Activated CD4-positive, alpha-beta memory T cell treated with anti-CD3 and anti-CD28 coated beads, Interleukin-2, amount 10 ng/mL, durations not matched to agents 7 days and 5 days (primary cell): ENCODE measurements at regions of chr16 and their contacts with region 1.

Region 1: GRCh38 chr16:1420111-1420540 is 421 bp downstream of the UQCC4 start:
- DNase-seq: peak; percentile 24
- H3K4me3 Mint-ChIP-seq: peak overlapping the region; percentile 86
- H3K27ac Mint-ChIP-seq: peak overlapping the region; percentile 98
- H3K4me1 Mint-ChIP-seq: peaks cover 39% of the 10 kb centered on the region
- H3K27me3 Mint-ChIP-seq: no peaks in the 10 kb centered on the region

Region 2: GRCh38 chr16:1208239-1208830 is 211.8 kb before region 1 on chr16:
- CTCF ChIA-PET with region 1: no interaction called
- POLR2A ChIA-PET with region 1: no interaction called
- DNase-seq: peak; percentile 22
- H3K4me3 Mint-ChIP-seq: peak overlapping the region; percentile 37
- H3K27ac Mint-ChIP-seq: peak overlapping the region; percentile 49
- H3K4me1 Mint-ChIP-seq: peaks cover 4% of the 10 kb centered on the region
- H3K27me3 Mint-ChIP-seq: no peaks in the 10 kb centered on the region

Region 3: GRCh38 chr16:1308977-1309885 is 110.9 kb before region 1 on chr16 and contains the start of gene UBE2I:
- CTCF ChIA-PET with region 1: no interaction called
- POLR2A ChIA-PET with region 1: interaction called, 10 read pairs
- DNase-seq: peak; percentile 98
- H3K4me3 Mint-ChIP-seq: peak within 1 kb of the TSS; percentile 100
- H3K27ac Mint-ChIP-seq: peak within 1 kb of the TSS; percentile 96
- H3K4me1 Mint-ChIP-seq: peaks cover 45% of the 10 kb centered on the region
- H3K27me3 Mint-ChIP-seq: no peaks in the 10 kb centered on the region
- total RNA-seq, gene UBE2I: 198 to 199 TPM

Region 4: DNA sequence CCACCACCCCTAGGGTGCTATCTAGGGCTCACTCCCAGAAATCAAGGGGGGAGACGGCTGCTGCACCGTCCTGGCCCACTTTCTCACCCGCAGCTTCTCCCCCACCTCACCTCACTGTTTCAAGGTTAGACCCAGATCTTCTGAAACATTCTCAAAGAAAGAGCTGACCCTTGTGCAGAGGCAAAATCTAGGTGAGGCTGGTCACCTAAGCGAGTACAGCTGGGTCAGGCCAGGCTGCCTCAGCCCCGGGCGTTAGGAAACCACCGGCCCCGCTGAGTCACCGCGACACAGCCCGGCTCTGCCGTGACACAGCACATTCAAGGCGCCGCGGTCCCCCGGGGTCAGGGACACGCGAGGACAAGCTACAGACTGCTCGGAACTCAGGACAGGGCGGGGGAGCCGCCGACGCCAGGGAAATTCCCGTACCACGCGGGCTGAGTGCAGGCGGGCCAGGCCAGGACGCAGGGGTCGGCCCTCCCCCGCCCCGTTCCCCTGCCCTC is 41.3 kb before region 1 on chr16:
- CTCF ChIA-PET with region 1: no interaction called
- POLR2A ChIA-PET with region 1: interaction called, 19 read pairs
- DNase-seq: peak; percentile 69
- H3K4me3 Mint-ChIP-seq: peak overlapping the region; percentile 75
- H3K27ac Mint-ChIP-seq: peak overlapping the region; percentile 77
- H3K4me1 Mint-ChIP-seq: peaks cover 20% of the 10 kb centered on the region
- H3K27me3 Mint-ChIP-seq: no peaks in the 10 kb centered on the region

Region 5: GRCh38 chr16:1492923-1493745 is 73.0 kb after region 1 on chr16 and contains the start of gene TELO2:
- CTCF ChIA-PET with region 1: no interaction called
- POLR2A ChIA-PET with region 1: interaction called, 14 read pairs
- DNase-seq: peak; percentile 89
- H3K4me3 Mint-ChIP-seq: peak within 1 kb of the TSS; percentile 94
- H3K27ac Mint-ChIP-seq: peak within 1 kb of the TSS; percentile 94
- H3K4me1 Mint-ChIP-seq: peaks cover 20% of the 10 kb centered on the region
- H3K27me3 Mint-ChIP-seq: no peaks in the 10 kb centered on the region
- total RNA-seq, gene TELO2: 49.4 to 51.9 TPM

Region 6: DNA sequence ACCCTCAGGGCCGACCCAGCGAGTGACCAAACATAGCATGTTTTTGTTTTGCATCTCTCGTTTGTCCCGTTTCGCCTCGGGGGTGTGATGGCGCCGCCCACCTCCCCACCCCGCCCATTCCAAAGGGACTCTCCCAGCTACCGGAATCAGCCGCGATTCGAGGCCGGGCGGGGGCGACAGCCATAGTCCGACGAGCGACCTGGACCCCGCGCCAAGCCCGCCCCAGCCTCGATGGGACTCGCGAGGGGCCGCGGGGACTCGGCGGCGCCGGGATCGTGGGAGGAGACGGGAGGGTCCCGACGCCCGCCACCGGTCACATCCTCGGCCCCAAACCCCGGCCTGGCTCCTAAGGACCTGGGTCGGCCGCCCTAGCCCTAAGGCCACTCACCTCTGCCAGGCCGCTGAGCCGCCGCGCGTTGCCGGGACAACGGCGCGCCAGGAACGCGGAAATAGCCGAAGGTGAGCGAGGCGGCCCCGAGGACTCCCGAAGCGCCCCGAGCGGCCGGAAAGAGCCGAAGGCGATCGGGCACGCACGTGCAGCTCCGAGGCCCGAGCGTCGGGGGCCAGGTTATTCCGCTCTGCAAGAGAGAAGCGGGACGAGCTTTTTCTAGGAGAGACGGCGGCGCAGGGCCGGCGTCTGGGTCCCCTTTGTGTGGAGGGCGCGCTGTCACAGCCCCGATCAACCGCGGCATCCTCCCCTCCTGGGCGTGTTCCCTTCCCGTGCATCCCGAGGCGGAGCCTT is 190.3 kb after region 1 on chr16:
- CTCF ChIA-PET with region 1: interaction called, 3 read pairs
- POLR2A ChIA-PET with region 1: interaction called, 11 read pairs
- DNase-seq: peak; percentile 92
- H3K4me3 Mint-ChIP-seq: peak overlapping the region; percentile 86
- H3K27ac Mint-ChIP-seq: peak overlapping the region; percentile 100
- H3K4me1 Mint-ChIP-seq: peaks cover 36% of the 10 kb centered on the region
- H3K27me3 Mint-ChIP-seq: no peaks in the 10 kb centered on the region